Common myeloid progenitor, CD34-positive (primary cell): ENCODE measurements at regions of chr1 and their contacts with region 1.

Region 1: GRCh38 chr1:40385437-40386358 is 12.2 kb downstream of the SMAP2 start:
- DNase-seq: peak; percentile 88 to 98 (median 97)
- H3K4me3 ChIP-seq: peak overlapping the region in 6 of 7 experiments; percentile 23 to 67 (median 42)
- H3K27ac ChIP-seq: peak overlapping the region; percentile 88 to 96
- H3K4me1 ChIP-seq: peaks cover 78 to 96% (median 81%) of the 10 kb centered on the region in 4 experiments
- H3K27me3 ChIP-seq: no peaks in the 10 kb centered on the region

Region 2: GRCh38 chr1:40373338-40374283 is 12.1 kb before region 1 on chr1 and contains the start of gene SMAP2:
- CTCF ChIA-PET with region 1: interaction called, 14 read pairs
- POLR2A ChIA-PET with region 1: interaction called, 4 read pairs
- DNase-seq: peak; percentile 94 to 96 (median 96)
- H3K4me3 ChIP-seq: peak within 1 kb of the TSS; percentile 89 to 98 (median 92)
- H3K27ac ChIP-seq: peak within 1 kb of the TSS; percentile 85 to 92
- H3K4me1 ChIP-seq: peaks cover 6 to 22% (median 17%) of the 10 kb centered on the region in 4 experiments
- H3K27me3 ChIP-seq: no peaks in the 10 kb centered on the region

Region 3: GRCh38 chr1:40404670-40405462 is 19.2 kb after region 1 on chr1:
- CTCF ChIA-PET with region 1: interaction called, 14 read pairs
- POLR2A ChIA-PET with region 1: no interaction called
- DNase-seq: peak; percentile 77 to 86 (median 82)
- H3K4me3 ChIP-seq: peak overlapping the region in 1 of 7 experiments; percentile 54
- H3K27ac ChIP-seq: no peak overlapping the region
- H3K4me1 ChIP-seq: peaks cover 3 to 20% (median 16%) of the 10 kb centered on the region in 4 experiments
- H3K27me3 ChIP-seq: no peaks in the 10 kb centered on the region